ENCODE measurements at regions of chr4 and their contacts with region 1.

Region 1: DNA sequence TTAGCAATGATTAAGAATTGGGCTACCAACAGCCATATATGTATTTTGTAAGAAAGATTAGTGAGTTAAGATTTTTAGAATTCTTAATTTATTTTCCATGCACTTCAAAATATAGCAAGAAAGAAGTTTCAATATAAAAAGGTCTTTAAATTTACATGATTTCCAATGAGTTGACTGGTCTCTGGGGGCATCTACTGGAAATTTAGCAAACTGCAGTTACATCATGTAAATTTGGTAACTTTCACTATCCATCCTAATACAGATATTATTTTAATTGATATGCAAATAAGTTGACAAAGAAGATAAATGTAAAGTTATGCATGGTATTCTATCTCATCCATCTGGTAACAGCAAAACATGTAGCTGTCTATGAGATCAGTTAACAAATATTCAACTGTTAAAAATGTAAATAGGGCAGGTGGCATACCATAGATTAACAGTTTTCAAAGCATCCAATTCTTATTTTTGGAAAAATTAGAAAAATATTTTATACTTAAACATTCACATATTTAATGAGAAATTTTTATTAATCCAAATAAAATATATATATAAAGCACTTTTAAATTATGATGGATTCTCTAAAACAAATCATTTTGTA is 29.1 kb downstream of the TTC29 start:
- DNase-seq: peak in 4 of 9 experiments; percentile 5 to 45 (median 23)
- ATAC-seq: no peak
- H3K4me3 ChIP-seq: no peak overlapping the region
- H3K4me3 Mint-ChIP-seq: no peak overlapping the region
- H3K27ac ChIP-seq: no peak overlapping the region
- H3K27ac Mint-ChIP-seq: no peak overlapping the region
- H3K4me1 ChIP-seq: no peaks in the 10 kb centered on the region
- H3K4me1 Mint-ChIP-seq: no peaks in the 10 kb centered on the region
- H3K27me3 ChIP-seq: no peaks in the 10 kb centered on the region
- H3K27me3 Mint-ChIP-seq: peaks cover 7% of the 10 kb centered on the region
- CTCF ChIP-seq: peak; percentile 64

Region 2: GRCh38 chr4:145234091-145234706 is 1682.4 kb before region 1 on chr4:
- CTCF ChIA-PET with region 1: no interaction called
- POLR2A ChIA-PET with region 1: no interaction called
- intact Hi-C with region 1: loop called (anchors 5 to 10 kb)
- DNase-seq: peak; percentile 4 to 75 (median 48)
- ATAC-seq: peak; percentile 83
- H3K4me3 ChIP-seq: no peak overlapping the region
- H3K4me3 Mint-ChIP-seq: no peak overlapping the region
- H3K27ac ChIP-seq: no peak overlapping the region
- H3K27ac Mint-ChIP-seq: no peak overlapping the region
- H3K4me1 ChIP-seq: no peaks in the 10 kb centered on the region
- H3K4me1 Mint-ChIP-seq: no peaks in the 10 kb centered on the region
- H3K27me3 ChIP-seq: no peaks in the 10 kb centered on the region
- H3K27me3 Mint-ChIP-seq: peaks cover 2% of the 10 kb centered on the region
- CTCF ChIP-seq: peak; percentile 66

Region 3: GRCh38 chr4:145956288-145956890 is 960.2 kb before region 1 on chr4:
- CTCF ChIA-PET with region 1: no interaction called
- POLR2A ChIA-PET with region 1: no interaction called
- intact Hi-C with region 1: loop called in 1 of 2 experiments (anchors 5 kb)
- DNase-seq: peak in 7 of 9 experiments; percentile 9 to 68 (median 33)
- ATAC-seq: peak; percentile 72
- H3K4me3 ChIP-seq: no peak overlapping the region
- H3K4me3 Mint-ChIP-seq: no peak overlapping the region
- H3K27ac ChIP-seq: no peak overlapping the region
- H3K27ac Mint-ChIP-seq: no peak overlapping the region
- H3K4me1 ChIP-seq: no peaks in the 10 kb centered on the region
- H3K4me1 Mint-ChIP-seq: no peaks in the 10 kb centered on the region
- H3K27me3 ChIP-seq: no peaks in the 10 kb centered on the region
- H3K27me3 Mint-ChIP-seq: peaks cover 2% of the 10 kb centered on the region
- CTCF ChIP-seq: peak; percentile 71

Region 4: GRCh38 chr4:146243141-146243882 is 673.3 kb before region 1 on chr4:
- CTCF ChIA-PET with region 1: no interaction called
- POLR2A ChIA-PET with region 1: no interaction called
- intact Hi-C with region 1: loop called in 1 of 2 experiments (anchors 2 kb)
- DNase-seq: peak in 8 of 9 experiments; percentile 24 to 66 (median 50)
- ATAC-seq: peak; percentile 74
- H3K4me3 ChIP-seq: peak overlapping the region in 1 of 2 experiments; percentile 28
- H3K4me3 Mint-ChIP-seq: peak overlapping the region; percentile 57
- H3K27ac ChIP-seq: no peak overlapping the region
- H3K27ac Mint-ChIP-seq: no peak overlapping the region
- H3K4me1 ChIP-seq: peaks cover 6% of the 10 kb centered on the region
- H3K4me1 Mint-ChIP-seq: peaks cover 18% of the 10 kb centered on the region
- H3K27me3 ChIP-seq: no peaks in the 10 kb centered on the region
- H3K27me3 Mint-ChIP-seq: peaks cover 5% of the 10 kb centered on the region
- CTCF ChIP-seq: peak; percentile 43

Region 5: DNA sequence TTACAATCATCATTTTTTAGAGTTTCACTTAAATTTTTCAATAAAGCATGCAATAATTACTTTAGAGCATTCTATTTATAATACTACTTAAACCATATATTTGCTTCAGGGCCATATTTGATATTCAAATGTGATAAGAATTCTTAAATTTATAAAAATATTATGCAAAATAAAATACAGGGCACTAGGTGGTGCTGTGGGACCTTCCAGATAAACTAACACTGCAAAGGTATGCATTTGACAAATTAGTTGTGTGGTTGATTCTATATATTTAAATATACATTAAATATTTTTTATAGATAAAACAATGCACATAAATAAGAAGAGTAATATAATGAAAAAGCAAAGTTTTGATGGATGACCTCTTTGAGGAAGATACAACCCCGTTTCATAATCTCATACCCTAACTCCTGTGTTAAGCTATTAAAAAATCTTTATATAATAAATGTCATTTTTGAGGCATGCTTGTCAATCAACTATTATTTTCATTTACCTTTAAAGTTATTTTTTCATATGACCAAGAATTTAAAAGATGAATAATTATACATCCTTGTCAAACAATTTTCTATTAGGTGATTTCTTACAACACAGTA is 573.9 kb before region 1 on chr4:
- CTCF ChIA-PET with region 1: interaction called, 3 read pairs
- POLR2A ChIA-PET with region 1: no interaction called
- intact Hi-C with region 1: loop called (anchors 1 kb)
- DNase-seq: peak in 4 of 9 experiments; percentile 7 to 57 (median 34)
- ATAC-seq: no peak
- H3K4me3 ChIP-seq: no peak overlapping the region
- H3K4me3 Mint-ChIP-seq: no peak overlapping the region
- H3K27ac ChIP-seq: no peak overlapping the region
- H3K27ac Mint-ChIP-seq: no peak overlapping the region
- H3K4me1 ChIP-seq: no peaks in the 10 kb centered on the region
- H3K4me1 Mint-ChIP-seq: peaks cover 2% of the 10 kb centered on the region
- H3K27me3 ChIP-seq: no peaks in the 10 kb centered on the region
- H3K27me3 Mint-ChIP-seq: no peaks in the 10 kb centered on the region
- CTCF ChIP-seq: peak; percentile 77

Region 6: GRCh38 chr4:146932111-146932510 is 15.5 kb after region 1 on chr4:
- CTCF ChIA-PET with region 1: no interaction called
- POLR2A ChIA-PET with region 1: no interaction called
- intact Hi-C with region 1: no loop called
- DNase-seq: no peak
- ATAC-seq: no peak
- H3K4me3 ChIP-seq: no peak overlapping the region
- H3K4me3 Mint-ChIP-seq: no peak overlapping the region
- H3K27ac ChIP-seq: no peak overlapping the region
- H3K27ac Mint-ChIP-seq: no peak overlapping the region
- H3K4me1 ChIP-seq: no peaks in the 10 kb centered on the region
- H3K4me1 Mint-ChIP-seq: no peaks in the 10 kb centered on the region
- H3K27me3 ChIP-seq: no peaks in the 10 kb centered on the region
- H3K27me3 Mint-ChIP-seq: peaks cover 5% of the 10 kb centered on the region
- CTCF ChIP-seq: no peak

Measured in CD8-positive, alpha-beta T cell (primary cell).